MCF 10A (cell line): ENCODE measurements at regions of chr1 and their contacts with region 1.

Region 1: DNA sequence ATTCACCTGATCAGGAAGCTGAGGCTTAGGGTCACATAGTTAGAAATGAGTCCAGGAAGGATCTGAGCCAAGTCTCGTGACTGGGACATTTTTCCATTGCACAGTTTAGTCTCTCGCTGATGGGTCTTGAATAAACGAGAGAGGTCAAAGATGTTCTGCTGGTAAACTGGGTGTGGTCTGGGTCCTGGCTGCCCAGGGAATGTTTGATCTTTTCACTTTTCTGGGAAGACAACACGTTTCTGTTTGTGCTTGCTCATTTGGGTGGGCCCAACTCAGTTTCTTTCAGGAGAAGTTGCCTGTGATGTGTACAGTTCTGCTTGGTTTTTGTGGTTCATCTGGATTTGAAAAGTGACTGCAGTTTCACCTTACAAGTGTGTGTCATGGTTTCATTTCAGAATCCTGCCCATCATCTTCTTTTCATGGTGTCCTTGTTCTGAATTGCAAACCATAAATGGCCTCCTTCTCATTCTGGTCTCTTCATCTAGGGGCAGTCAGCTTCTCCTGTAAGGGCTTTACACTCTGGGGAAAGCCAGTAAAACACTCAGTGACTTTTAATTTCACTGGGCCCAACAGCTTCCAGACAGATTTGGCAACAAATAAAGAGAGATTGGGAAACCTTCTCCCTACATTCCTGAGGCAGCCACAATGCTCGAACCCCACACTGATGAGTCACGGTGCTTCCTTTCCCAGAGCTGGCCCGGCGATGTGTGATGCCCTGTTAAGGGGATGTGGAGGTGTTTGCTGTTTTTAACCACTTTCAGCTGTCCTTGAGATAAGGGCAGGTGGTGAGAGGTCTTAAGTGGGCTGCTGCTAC is 7.2 kb upstream of the TACSTD2 start:
- DNase-seq: peak; percentile 98
- H3K4me3 Mint-ChIP-seq: peak overlapping the region; percentile 55
- H3K27ac Mint-ChIP-seq: peak overlapping the region; percentile 92
- H3K4me1 Mint-ChIP-seq: peaks cover 36% of the 10 kb centered on the region
- H3K27me3 Mint-ChIP-seq: no peaks in the 10 kb centered on the region
- CTCF ChIP-seq: no peak

Region 2: GRCh38 chr1:58546520-58547308 is 37.6 kb before region 1 on chr1 and contains the start of gene OMA1:
- CTCF ChIA-PET with region 1: interaction called, 4 read pairs
- POLR2A ChIA-PET with region 1: interaction called, 151 read pairs
- intact Hi-C with region 1: no loop called
- DNase-seq: peak; percentile 93
- H3K4me3 Mint-ChIP-seq: peak within 1 kb of the TSS; percentile 92
- H3K27ac Mint-ChIP-seq: peak within 1 kb of the TSS; percentile 95
- H3K4me1 Mint-ChIP-seq: peaks cover 20% of the 10 kb centered on the region
- H3K27me3 Mint-ChIP-seq: no peaks in the 10 kb centered on the region
- CTCF ChIP-seq: peak; percentile 84
- total RNA-seq, gene OMA1: 15.7 and 17.9 TPM in 2 replicates